GM18951 (cell line): ENCODE measurements at regions of chr15 and their contacts with region 1.

Region 1: DNA sequence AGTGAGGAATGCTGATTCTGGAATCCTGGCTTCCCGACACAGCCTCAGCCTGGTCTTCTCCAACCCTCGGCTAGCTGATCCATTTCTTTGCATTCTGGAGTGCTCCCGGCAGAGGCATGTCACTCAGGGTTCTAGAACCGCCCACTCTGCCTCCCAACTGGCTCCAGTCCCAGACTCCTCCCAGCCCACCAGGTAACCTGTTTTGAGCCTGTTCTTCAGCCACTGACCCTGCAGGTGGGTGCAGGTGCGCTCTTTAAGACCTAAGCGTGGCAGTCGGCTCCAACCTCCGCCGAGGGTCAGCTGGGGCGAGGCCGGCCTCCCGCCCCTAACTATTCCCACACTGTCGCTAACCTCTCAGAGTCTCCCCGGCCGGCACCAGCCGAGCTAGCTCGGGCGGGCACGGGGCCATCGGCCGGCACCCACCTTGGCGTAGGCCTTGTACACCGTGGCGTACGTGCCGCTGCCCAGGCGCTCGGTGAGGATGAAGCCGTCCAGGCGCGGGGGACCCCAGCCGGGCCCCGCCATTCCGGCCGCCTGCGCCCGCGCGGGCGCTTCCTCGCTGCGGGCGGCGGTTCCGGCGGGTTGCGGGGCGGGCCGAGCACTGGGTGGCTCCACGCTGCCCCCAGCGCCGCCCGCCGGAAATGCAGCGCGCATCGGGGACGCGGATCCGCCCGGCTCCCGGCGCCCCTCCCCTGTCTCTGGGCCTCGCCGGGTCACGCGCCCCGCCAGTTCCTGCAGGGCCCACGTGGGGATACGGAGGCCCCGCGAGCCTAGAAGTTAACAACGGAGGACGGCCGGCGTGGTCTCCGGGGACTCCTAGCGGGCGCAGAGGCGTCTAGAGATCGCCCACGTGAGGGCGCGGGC is at the start of gene ULK3:
- POLR2A ChIP-seq: peak; percentile 67

Region 2: GRCh38 chr15:74889883-74890664 is 47.3 kb after region 1 on chr15 and contains the start of gene MPI:
- in situ Hi-C with region 1: loop called (anchors 10 kb)
- POLR2A ChIP-seq: peak; percentile 93